Upper lobe of right lung (tissue), 1 donor: ENCODE measurements at regions of chr3 and their contacts with region 1.

Region 1: GRCh38 chr3:126389112-126389793 is 5.5 kb upstream of the CFAP100 start:
- DNase-seq: peak; percentile 96
- ATAC-seq: peak; percentile 99
- H3K4me3 ChIP-seq: peak overlapping the region; percentile 45
- H3K27ac ChIP-seq: peak overlapping the region; percentile 87
- H3K4me1 ChIP-seq: peaks cover 6% of the 10 kb centered on the region
- H3K27me3 ChIP-seq: peaks cover 2% of the 10 kb centered on the region
- CTCF ChIP-seq: peak; percentile 91

Region 2: GRCh38 chr3:126259411-126260391 is 129.6 kb before region 1 on chr3:
- intact Hi-C with region 1: loop called (anchors 5 kb)
- DNase-seq: peak; percentile 85
- ATAC-seq: peak; percentile 87
- H3K4me3 ChIP-seq: no peak overlapping the region
- H3K27ac ChIP-seq: no peak overlapping the region
- H3K4me1 ChIP-seq: peaks cover 5% of the 10 kb centered on the region
- H3K27me3 ChIP-seq: no peaks in the 10 kb centered on the region
- CTCF ChIP-seq: peak; percentile 81

Region 3: GRCh38 chr3:126765187-126766069 is 376.2 kb after region 1 on chr3:
- intact Hi-C with region 1: no loop called
- DNase-seq: no peak
- ATAC-seq: peak; percentile 75
- H3K4me3 ChIP-seq: no peak overlapping the region
- H3K27ac ChIP-seq: no peak overlapping the region
- H3K4me1 ChIP-seq: no peaks in the 10 kb centered on the region
- H3K27me3 ChIP-seq: no peaks in the 10 kb centered on the region
- CTCF ChIP-seq: no peak